Ascending aorta (tissue), 2 donors: ENCODE measurements at regions of chr12 and their contacts with region 1.

Region 1: GRCh38 chr12:23361971-23362370 is 587.5 kb downstream of the SOX5 start:
- DNase-seq: no peak
- H3K4me3 ChIP-seq: no peak overlapping the region
- H3K27ac ChIP-seq: peak overlapping the region in 1 of 2 donors; percentile 85
- H3K4me1 ChIP-seq: peaks cover 0 to 22% of the 10 kb centered on the region in 2 donors
- H3K27me3 ChIP-seq: no peaks in the 10 kb centered on the region
- CTCF ChIP-seq: peak in 1 of 3 experiments; percentile 9

Region 2: DNA sequence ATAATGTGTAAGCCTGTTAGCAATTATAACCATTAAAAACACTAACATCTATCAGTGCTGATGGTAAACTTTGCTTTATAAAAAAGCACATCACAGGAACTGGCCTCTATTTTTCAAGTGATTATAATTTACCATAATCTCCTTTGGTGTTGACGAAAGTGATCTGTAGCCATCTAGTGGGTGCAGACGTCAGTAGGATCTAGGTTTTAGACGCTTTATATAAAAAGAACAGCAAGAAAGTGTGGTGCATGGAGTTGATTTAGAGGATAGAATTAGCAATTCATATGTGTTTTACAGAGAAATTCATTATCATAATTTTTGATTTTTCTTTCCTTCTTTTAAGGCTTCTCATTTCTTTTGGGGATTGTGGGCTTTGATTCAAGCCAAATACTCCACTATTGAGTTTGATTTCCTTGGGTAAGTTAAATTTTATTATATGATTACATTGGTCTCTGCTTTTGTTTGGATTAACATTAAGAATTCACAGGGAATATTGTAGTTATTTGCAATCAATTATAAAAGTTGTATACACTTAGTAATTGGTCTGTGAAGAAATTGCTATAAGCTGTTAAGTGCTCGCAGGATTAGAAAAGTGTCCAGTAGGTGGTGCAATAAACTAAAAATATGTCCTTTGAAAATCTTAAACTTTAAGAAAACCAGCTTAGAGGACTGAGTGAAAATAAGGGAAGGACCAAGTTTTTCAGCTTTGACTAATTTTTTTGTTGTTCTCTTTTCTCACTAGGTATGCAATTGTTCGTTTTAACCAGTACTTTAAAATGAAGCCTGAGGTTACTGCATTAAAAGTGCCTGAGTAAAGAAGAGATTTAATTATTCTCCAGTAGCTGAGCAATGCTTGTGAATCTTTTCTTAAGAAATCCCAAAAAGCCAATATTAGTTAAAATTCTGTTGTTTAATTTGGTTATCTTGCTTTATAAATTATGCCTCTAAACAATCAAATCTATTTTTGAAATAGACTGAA is 677.5 kb before region 1 on chr12:
- intact Hi-C with region 1: loop called (anchors 5 kb)
- DNase-seq: no peak
- H3K4me3 ChIP-seq: no peak overlapping the region
- H3K27ac ChIP-seq: no peak overlapping the region
- H3K4me1 ChIP-seq: peaks cover 11 to 20% of the 10 kb centered on the region in 2 donors
- H3K27me3 ChIP-seq: no peaks in the 10 kb centered on the region
- CTCF ChIP-seq: peak; percentile 40 to 62 (median 46)

Region 3: DNA sequence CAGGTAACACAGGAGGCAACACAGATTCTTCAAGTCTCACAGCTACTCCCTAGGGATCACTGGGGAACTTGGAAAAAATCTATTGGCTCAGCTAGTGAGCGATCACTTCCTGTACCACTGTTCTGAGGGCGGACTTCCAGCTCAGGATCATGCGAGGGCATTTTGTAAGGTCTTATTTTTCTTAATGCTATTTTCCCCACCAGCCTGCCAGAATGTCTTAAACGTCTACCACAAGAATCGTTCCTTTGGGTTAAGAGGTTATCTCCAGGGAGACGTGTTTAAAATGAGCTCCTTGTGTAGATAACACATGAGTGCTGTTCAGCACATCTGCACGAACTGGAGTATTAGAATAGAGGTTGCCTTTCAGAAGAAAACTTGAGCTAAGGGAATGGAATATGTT is 574.4 kb before region 1 on chr12:
- intact Hi-C with region 1: loop called (anchors 5 kb)
- DNase-seq: peak in 1 of 2 donors; percentile 85
- H3K4me3 ChIP-seq: peak overlapping the region; percentile 7 to 34
- H3K27ac ChIP-seq: peak overlapping the region; percentile 63 to 86
- H3K4me1 ChIP-seq: peaks cover 0 to 29% of the 10 kb centered on the region in 2 donors
- H3K27me3 ChIP-seq: no peaks in the 10 kb centered on the region
- CTCF ChIP-seq: no peak

Region 4: DNA sequence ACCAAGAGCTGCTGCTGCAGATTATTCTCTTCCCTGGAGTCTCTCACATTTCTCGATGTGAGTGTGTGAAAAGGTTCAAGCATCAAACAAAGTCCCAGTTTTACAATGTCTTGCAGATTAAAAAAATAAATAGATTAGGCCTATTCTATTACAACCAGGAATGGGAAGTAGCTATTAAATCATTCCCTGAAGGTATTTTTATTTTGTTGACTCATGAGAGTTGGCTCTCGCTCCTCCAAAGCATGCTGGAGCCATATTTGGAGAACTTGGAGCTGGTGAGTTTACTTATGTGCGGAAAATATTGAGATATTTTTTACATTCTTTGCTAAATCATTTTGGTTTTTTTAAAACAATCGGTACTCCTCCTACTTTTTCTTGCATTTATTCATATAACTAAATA is 164.7 kb before region 1 on chr12:
- intact Hi-C with region 1: loop called (anchors 5 kb)
- DNase-seq: peak in 1 of 2 donors; percentile 69
- H3K4me3 ChIP-seq: peak overlapping the region; percentile 7 to 22
- H3K27ac ChIP-seq: peak overlapping the region; percentile 76 to 79
- H3K4me1 ChIP-seq: peaks cover 3 to 11% of the 10 kb centered on the region in 2 donors
- H3K27me3 ChIP-seq: no peaks in the 10 kb centered on the region
- CTCF ChIP-seq: no peak

Region 5: GRCh38 chr12:23221066-23221465 is 140.9 kb before region 1 on chr12:
- intact Hi-C with region 1: loop called (anchors 5 kb)
- DNase-seq: no peak
- H3K4me3 ChIP-seq: no peak overlapping the region
- H3K27ac ChIP-seq: no peak overlapping the region
- H3K4me1 ChIP-seq: no peaks in the 10 kb centered on the region
- H3K27me3 ChIP-seq: no peaks in the 10 kb centered on the region
- CTCF ChIP-seq: no peak

Region 6: DNA sequence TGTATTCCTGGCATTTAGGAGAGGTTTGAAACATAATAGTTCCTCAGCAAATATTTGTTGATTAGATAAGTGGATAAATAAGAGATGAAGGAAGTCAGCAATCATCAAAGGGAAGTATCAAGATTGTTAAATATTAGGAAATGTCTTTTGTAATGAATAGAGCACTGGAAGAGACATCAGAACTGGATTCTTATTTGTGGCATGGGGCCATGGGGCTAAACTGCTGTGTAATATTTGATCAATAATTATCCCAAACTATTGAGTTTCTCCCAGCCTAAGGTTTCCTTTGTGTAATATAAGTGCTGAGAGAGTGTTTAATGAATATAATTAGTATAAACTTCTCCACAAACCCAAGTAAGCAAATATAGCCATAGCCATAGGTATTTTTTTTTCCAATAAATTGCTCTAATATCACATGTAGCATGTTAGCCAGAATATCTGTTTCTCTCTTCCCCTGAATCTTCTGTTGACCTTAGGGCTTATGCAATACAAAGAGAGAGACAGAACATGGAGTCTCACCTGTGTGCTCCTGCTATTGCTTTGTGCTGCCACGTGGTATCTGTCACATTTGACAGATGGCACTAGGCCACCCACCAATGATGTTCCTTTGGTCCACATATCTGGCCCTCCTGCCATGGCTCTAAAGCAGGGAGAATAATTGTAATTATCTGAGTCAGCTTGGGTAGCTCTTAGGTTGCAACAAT is 71.2 kb before region 1 on chr12:
- intact Hi-C with region 1: loop called (anchors 2 kb)
- DNase-seq: no peak
- H3K4me3 ChIP-seq: no peak overlapping the region
- H3K27ac ChIP-seq: no peak overlapping the region
- H3K4me1 ChIP-seq: peaks cover 2 to 29% of the 10 kb centered on the region in 2 donors
- H3K27me3 ChIP-seq: no peaks in the 10 kb centered on the region
- CTCF ChIP-seq: no peak

Region 7: GRCh38 chr12:23339783-23340182 is 22.2 kb before region 1 on chr12:
- intact Hi-C with region 1: no loop called
- DNase-seq: no peak
- H3K4me3 ChIP-seq: no peak overlapping the region
- H3K27ac ChIP-seq: no peak overlapping the region
- H3K4me1 ChIP-seq: peaks cover 0 to 1% of the 10 kb centered on the region in 2 donors
- H3K27me3 ChIP-seq: no peaks in the 10 kb centered on the region
- CTCF ChIP-seq: no peak